WTC11 (cell line): ENCODE measurements at regions of chr12 and their contacts with region 1.

Region 1: DNA sequence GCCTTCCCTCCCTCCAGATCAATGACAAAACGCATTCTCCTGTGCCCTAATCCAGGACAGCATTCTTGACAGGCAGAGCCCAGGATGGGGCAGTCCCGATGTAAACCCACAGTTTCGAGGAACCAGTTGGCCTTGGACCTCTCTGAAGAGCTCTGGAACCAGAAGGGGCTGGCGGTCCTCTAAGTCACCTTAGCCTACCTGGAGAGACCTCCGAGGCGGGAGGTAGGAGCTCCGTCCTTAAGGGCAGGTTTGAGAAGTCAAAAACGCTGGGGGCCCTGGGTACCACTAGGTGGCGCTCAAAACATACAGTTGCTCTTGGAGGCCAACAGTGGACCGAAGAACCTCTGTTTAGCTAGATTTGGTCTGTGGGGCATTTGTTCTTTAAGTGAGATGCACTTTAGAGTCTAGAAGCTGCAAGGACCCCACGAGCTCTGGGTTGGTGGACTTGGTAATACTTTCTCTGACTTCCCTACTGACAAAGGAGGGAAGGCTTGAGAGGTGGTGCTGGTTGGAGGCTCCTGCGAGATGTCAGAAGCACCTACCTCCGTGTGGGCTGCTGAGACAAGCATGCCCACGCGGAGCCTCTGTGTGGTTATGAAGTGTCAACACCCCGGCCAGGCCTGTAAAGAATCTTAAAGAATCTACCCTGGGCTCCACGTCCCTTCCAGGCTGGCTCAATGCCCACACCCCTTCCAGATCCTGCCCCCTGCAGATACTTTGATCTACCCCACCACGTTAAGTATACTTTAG is 74.8 kb upstream of the CHST11 start:
- DNase-seq: peak; percentile 88
- ATAC-seq: peak; percentile 95
- H3K4me3 Mint-ChIP-seq: peak overlapping the region; percentile 47
- H3K27ac Mint-ChIP-seq: no peak overlapping the region
- H3K4me1 Mint-ChIP-seq: peaks cover 10% of the 10 kb centered on the region
- H3K27me3 Mint-ChIP-seq: no peaks in the 10 kb centered on the region
- CTCF ChIP-seq: peak; percentile 91

Region 2: DNA sequence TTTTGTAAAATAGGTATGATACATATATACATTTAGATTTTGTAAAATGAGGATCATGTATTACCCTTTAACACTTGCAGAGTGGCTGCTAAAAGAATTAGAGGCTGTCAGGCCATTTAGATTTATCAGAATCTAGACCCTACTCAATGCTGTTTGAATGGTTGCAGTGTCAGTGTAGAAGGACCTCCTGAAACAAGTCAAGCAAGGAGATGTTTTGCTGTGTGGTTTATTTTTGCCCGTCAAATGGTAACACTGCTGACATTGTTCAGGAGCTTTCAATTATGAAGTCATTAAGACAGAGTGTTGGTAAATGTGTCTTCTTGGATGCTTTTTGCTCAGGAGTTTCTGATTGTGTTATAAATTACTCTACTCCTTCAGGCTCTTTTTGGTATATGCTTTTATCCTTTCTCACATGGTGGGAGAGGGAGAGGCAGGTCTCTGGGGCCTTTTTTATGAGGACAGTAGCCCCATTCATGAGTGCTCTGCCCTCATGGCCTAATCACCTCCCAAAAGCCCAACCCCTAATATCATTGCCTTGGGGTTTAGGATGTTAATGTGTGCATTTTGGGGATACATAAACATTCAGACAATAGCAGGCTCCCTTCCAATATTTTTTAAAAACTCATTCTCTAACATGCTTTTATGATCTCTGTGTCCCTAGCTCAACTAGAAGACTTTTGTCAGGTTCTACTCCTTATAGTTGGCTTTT is 61.8 kb before region 1 on chr12:
- CTCF ChIA-PET with region 1: no interaction called
- POLR2A ChIA-PET with region 1: no interaction called
- DNase-seq: no peak
- ATAC-seq: no peak
- H3K4me3 Mint-ChIP-seq: no peak overlapping the region
- H3K27ac Mint-ChIP-seq: no peak overlapping the region
- H3K4me1 Mint-ChIP-seq: no peaks in the 10 kb centered on the region
- H3K27me3 Mint-ChIP-seq: no peaks in the 10 kb centered on the region
- CTCF ChIP-seq: no peak

Region 3: DNA sequence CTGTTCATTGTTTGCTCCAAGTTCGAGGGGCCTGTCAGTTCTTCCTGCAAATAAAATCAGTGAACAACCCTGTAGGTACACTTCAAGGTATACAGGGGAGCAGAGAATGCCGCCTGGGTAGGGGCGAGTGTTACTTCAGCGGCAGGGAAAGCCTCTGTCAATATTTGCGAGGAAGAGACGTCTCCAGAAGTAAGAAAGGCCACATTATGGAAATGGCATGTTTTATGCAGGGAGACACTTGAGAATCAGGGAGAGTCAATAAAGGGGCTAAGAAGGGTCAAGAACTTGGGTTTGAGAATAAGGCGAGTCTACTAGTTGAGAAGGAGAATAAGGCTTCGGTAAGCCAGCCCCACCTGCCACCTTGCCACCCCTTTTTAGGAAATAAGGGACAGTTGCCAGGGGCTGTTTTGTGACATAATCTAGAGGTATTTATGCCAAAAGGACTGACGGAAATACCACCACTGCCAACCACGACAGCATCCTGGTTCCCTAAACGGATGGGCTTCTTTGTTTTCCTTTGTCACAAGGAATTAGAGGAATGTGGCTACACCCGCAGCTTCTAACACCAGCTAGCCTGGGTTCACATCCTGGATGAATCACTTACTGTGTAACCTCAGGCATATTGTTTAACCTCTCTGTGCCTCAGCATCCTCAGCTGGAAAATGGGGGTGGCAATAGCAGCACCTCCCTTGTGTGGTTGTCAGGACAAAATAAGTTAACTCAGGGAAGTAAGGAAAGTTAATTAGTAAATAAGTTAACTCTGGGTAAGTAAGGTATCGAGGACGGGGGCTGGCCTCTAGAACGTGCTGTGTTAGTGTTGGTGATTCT is 10.6 kb before region 1 on chr12:
- CTCF ChIA-PET with region 1: interaction called, 23 read pairs
- POLR2A ChIA-PET with region 1: no interaction called
- DNase-seq: peak; percentile 17
- ATAC-seq: peak; percentile 82
- H3K4me3 Mint-ChIP-seq: no peak overlapping the region
- H3K27ac Mint-ChIP-seq: peak overlapping the region; percentile 85
- H3K4me1 Mint-ChIP-seq: peaks cover 31% of the 10 kb centered on the region
- H3K27me3 Mint-ChIP-seq: peaks cover 3% of the 10 kb centered on the region; the same call in 1 of the 2 replicates
- CTCF ChIP-seq: no peak

Region 4: GRCh38 chr12:104501660-104502059 is 119.8 kb after region 1 on chr12:
- CTCF ChIA-PET with region 1: interaction called, 14 read pairs
- POLR2A ChIA-PET with region 1: no interaction called
- DNase-seq: no peak
- ATAC-seq: no peak
- H3K4me3 Mint-ChIP-seq: no peak overlapping the region
- H3K27ac Mint-ChIP-seq: no peak overlapping the region
- H3K4me1 Mint-ChIP-seq: peaks cover 61% of the 10 kb centered on the region
- H3K27me3 Mint-ChIP-seq: no peaks in the 10 kb centered on the region
- CTCF ChIP-seq: no peak

Region 5: GRCh38 chr12:104569346-104570173 is 187.7 kb after region 1 on chr12:
- CTCF ChIA-PET with region 1: interaction called, 10 read pairs
- POLR2A ChIA-PET with region 1: no interaction called
- DNase-seq: no peak
- ATAC-seq: no peak
- H3K4me3 Mint-ChIP-seq: no peak overlapping the region
- H3K27ac Mint-ChIP-seq: no peak overlapping the region
- H3K4me1 Mint-ChIP-seq: peaks cover 4% of the 10 kb centered on the region; the same call in 1 of the 2 replicates
- H3K27me3 Mint-ChIP-seq: no peaks in the 10 kb centered on the region
- CTCF ChIP-seq: no peak

Region 6: GRCh38 chr12:104671407-104672098 is 289.6 kb after region 1 on chr12:
- CTCF ChIA-PET with region 1: interaction called, 30 read pairs
- POLR2A ChIA-PET with region 1: no interaction called
- DNase-seq: no peak
- ATAC-seq: no peak
- H3K4me3 Mint-ChIP-seq: no peak overlapping the region
- H3K27ac Mint-ChIP-seq: peak overlapping the region; percentile 17
- H3K4me1 Mint-ChIP-seq: peaks cover 35% of the 10 kb centered on the region
- H3K27me3 Mint-ChIP-seq: no peaks in the 10 kb centered on the region
- CTCF ChIP-seq: no peak

Region 7: GRCh38 chr12:104827587-104827986 is 445.7 kb after region 1 on chr12:
- CTCF ChIA-PET with region 1: interaction called, 18 read pairs
- POLR2A ChIA-PET with region 1: no interaction called
- DNase-seq: peak; percentile 67
- ATAC-seq: peak; percentile 88
- H3K4me3 Mint-ChIP-seq: no peak overlapping the region
- H3K27ac Mint-ChIP-seq: no peak overlapping the region
- H3K4me1 Mint-ChIP-seq: no peaks in the 10 kb centered on the region
- H3K27me3 Mint-ChIP-seq: peaks cover 7% of the 10 kb centered on the region
- CTCF ChIP-seq: peak; percentile 50